KBM-7 (cell line): ENCODE measurements at regions of chr14 and their contacts with region 1.

Region 1: GRCh38 chr14:53306267-53306721 is 153.2 kb upstream of the DDHD1 start:
- DNase-seq: peak; percentile 58

Region 2: DNA sequence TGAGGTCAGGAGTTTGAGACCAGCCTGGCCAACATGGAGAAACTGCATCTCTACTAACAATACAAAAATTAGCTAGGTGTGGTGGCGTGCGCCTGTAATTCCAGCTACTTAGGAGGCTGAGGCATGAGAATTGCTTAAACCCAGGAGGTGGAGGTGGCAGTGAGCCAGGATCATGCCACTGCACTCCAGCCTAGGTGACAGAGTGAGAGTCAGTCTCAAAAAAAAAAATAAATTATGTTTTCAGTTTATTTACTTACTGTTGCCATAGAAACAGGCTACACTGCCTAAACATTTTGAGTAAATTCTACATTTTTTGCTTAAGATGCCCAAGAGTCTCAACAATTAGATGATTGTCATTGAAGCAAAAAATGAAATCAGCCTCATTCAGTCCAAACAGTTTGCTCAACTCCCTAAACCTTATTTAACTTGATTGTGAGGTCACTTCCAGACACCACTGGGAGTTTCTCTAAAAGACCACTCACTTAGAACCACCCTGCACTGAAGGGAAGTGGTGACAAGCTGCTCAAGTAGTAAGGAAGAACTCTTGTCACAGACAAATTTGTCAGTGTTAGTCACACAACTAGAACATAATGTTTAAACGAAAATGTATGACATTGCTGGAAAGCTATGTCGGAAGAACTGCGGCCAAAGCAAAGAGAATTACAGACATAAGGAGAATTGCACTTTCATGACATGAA is 505.1 kb before region 1 on chr14:
- in situ Hi-C with region 1: loop called (anchors 25 kb)
- DNase-seq: peak; percentile 60

Region 3: DNA sequence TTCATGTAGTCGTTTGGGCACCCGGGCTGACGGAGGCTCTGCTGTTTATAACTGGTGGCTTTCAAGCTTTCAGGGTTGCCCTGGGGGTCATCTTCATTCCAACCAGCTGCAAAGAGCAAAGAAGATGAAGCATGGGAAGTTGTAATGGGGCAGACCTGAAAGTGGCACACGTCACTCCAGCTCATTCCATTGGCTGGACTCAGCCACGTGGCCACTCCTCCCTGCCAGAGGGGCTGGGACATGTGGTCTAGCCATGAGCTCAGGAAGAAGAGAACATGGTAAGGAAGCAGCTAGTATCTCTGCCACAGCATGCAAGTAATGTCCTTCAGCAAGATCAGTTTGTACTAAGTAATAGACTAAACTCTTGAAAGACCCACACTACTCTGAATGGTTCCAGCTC is 303.7 kb before region 1 on chr14:
- in situ Hi-C with region 1: no loop called
- DNase-seq: peak; percentile 5